Thyroid gland (tissue), 4 donors: ENCODE measurements at regions of chr10 and their contacts with region 1.

Region 1: DNA sequence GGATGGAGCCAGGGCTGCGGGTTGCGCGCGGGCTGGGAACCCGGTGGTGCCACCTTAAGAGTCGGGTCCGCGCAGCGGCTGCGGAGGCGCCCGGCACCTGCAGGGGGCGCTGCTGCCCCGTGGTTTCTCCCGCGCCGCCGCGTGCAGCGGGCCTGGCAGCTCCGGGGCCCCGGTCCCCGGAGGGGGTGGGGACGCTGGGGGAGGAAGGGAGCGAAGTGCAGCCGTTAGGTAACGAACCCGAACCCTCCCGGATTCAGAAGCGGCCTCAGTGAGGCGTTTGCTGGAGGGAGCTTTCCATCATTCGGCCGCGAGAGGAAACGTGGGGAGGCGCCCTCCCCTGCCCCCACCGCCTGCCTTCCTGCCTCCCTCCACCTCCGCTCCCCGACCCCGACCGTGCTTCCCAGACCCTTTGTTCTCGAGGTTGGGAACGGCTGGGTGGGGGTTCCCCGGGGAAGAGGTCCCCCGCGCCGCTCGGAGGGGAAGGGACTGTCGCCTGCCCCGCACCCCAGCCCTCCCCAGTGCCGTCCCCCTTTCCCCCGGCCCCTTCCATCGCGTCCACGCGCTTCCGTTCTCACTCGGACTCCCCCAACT is 29.6 kb downstream of the SKIDA1 start:
- DNase-seq: peak; percentile 86 to 88
- H3K4me3 ChIP-seq: peak overlapping the region; percentile 55 to 80 (median 78)
- H3K27ac ChIP-seq: peak overlapping the region; percentile 52 to 81 (median 79)
- H3K4me1 ChIP-seq: peaks cover 4 to 7% of the 10 kb centered on the region in 2 donors
- H3K27me3 ChIP-seq: no peaks in the 10 kb centered on the region
- CTCF ChIP-seq: peak; percentile 69 to 99 (median 97)
- POLR2A ChIP-seq: peak in 1 of 2 donors; percentile 27

Region 2: GRCh38 chr10:21285742-21286331 is 210.0 kb before region 1 on chr10:
- intact Hi-C with region 1: loop called (anchors 10 kb)
- DNase-seq: no peak
- H3K4me3 ChIP-seq: no peak overlapping the region
- H3K27ac ChIP-seq: no peak overlapping the region
- H3K4me1 ChIP-seq: peaks cover 7 to 14% of the 10 kb centered on the region in 2 donors
- H3K27me3 ChIP-seq: no peaks in the 10 kb centered on the region
- CTCF ChIP-seq: no peak
- POLR2A ChIP-seq: no peak

Region 3: DNA sequence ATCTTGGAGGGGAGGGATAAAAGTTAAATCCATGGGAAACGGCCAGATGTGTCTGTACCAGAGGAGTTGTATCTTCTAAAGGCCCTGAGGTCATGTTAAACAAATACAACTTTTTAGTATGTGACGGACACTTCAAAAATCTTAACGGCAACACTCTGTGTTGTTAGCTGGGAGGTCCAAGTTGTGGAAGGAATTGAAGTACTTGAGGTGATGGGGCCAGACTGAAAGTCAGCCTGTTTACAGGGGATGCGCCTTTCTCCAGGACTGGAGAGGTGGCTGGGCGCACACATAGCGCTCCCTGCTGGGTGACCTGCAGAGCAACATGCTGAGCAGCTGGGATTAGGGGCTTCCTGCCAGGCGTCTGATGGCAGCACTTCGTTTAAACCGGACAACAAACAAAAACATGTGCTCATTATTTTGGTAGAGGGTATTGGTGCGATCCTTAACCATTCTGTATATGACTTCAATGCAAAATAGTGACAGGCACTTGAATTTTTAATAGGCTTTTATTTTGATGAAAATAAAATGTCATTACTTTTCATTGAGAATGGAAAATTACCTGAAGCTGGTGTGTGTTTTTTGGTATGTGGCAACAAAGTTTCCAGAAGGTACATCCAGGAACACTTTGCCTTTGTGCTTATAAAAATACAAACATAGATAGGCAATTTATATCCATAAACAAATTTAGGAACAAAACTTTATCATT is 236.4 kb after region 1 on chr10:
- intact Hi-C with region 1: loop called (anchors 5 kb)
- DNase-seq: peak; percentile 51 to 63
- H3K4me3 ChIP-seq: no peak overlapping the region
- H3K27ac ChIP-seq: no peak overlapping the region
- H3K4me1 ChIP-seq: peaks cover 3 to 4% of the 10 kb centered on the region in 2 donors
- H3K27me3 ChIP-seq: no peaks in the 10 kb centered on the region
- CTCF ChIP-seq: peak in 5 of 6 experiments; percentile 25 to 71 (median 65)
- POLR2A ChIP-seq: no peak

Region 4: GRCh38 chr10:21953585-21954057 is 457.8 kb after region 1 on chr10:
- intact Hi-C with region 1: loop called (anchors 10 kb)
- DNase-seq: no peak
- H3K4me3 ChIP-seq: no peak overlapping the region
- H3K27ac ChIP-seq: no peak overlapping the region
- H3K4me1 ChIP-seq: peaks cover 0 to 3% of the 10 kb centered on the region in 2 donors
- H3K27me3 ChIP-seq: no peaks in the 10 kb centered on the region
- CTCF ChIP-seq: peak in 3 of 6 experiments; percentile 32 to 65 (median 47)
- POLR2A ChIP-seq: no peak

Region 5: DNA sequence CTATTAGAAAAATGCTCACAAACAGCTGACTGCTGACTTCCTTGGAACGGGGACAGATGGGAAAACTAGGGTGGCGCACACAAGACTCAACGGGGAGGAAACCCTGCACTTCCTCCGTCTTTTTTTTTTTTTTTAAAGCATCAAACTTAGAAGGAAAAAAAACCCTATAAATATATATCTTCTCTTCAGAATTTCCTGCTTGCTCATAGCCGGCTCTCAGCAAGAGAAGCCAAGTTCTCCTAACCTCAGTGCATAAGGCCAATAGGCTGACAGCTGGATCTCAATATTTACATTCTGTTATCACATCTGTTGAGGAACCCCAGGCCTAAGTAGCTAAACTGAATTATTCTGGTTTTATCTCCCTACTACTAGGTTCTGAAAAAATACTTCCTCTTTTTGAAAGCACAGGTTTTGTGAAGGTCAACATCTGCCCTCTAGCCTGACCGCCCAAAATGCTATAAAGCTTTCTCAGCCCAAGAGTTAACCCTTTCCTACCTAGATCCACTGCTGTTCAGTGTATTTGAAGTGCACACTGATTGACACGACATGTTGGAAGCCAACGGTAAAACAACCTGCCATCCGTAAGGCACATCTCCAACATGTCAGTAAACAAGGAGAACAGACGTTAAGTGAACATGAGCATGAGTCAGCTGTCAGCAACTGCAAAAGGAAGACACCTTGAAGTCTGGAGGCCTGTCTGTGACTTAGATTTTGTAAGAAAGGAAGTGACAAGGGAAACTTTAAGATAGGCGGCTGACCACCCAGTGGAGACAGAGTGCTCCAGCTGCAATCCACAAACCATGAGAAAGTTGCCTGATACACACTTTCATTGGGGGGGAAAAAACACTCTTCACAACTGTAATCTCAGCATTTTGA is 638.1 kb after region 1 on chr10:
- intact Hi-C with region 1: no loop called
- DNase-seq: no peak
- H3K4me3 ChIP-seq: no peak overlapping the region
- H3K27ac ChIP-seq: no peak overlapping the region
- H3K4me1 ChIP-seq: no peaks in the 10 kb centered on the region
- H3K27me3 ChIP-seq: no peaks in the 10 kb centered on the region
- CTCF ChIP-seq: no peak
- POLR2A ChIP-seq: no peak